Esophagus squamous epithelium (tissue), 5 donors: ENCODE measurements at regions of chr3 and their contacts with region 1.

Region 1: GRCh38 chr3:11335056-11335608 is 62.9 kb downstream of the ATG7 start:
- DNase-seq: no peak
- H3K4me3 ChIP-seq: no peak overlapping the region
- H3K27ac ChIP-seq: no peak overlapping the region
- H3K4me1 ChIP-seq: peaks cover 0 to 3% (median 0%) of the 10 kb centered on the region in 3 donors
- H3K27me3 ChIP-seq: no peaks in the 10 kb centered on the region
- CTCF ChIP-seq: peak; percentile 32 to 87 (median 68)
- POLR2A ChIP-seq: no peak

Region 2: DNA sequence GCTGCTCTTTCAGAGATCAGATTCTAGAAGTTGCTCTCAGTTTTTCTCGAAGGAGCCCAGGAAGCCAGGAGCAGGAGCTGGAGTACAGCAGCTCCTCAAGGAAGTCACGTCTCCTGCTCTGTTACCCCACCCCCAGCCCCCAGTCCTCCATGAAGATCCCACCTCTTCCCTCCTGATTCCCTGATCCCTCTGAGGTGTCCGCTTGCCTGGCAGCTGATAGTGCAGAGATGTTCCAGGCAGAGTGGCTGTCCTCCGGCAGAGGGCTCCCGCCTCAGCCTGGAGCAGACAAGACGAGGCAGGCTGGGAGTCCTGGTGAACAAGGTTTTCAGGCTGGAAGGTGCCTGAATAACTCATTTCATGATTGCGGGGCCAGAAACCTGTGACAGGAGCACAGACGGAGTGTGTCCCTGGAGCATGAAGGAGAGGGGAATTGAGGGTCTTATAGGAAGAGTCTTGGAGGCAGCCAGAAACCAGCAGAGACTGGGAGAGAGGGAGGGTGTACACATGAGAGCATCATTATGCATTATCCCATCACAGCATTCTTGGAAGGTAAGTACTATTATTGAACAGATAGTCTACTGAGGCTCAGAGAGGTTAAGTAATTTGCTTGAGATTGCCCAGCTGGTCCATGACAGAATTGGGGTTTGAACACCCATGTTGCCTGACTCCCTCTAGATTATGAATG is 179.6 kb before region 1 on chr3:
- intact Hi-C with region 1: loop called (anchors 10 kb)
- DNase-seq: no peak
- H3K4me3 ChIP-seq: peak overlapping the region; percentile 47 to 78 (median 54)
- H3K27ac ChIP-seq: peak overlapping the region; percentile 46 to 75 (median 70)
- H3K4me1 ChIP-seq: peaks cover 8 to 44% (median 20%) of the 10 kb centered on the region in 3 donors
- H3K27me3 ChIP-seq: peaks cover 0 to 39% (median 0%) of the 10 kb centered on the region in 4 donors
- CTCF ChIP-seq: peak; percentile 12 to 81 (median 69)
- POLR2A ChIP-seq: no peak

Region 3: GRCh38 chr3:11764931-11765363 is 429.8 kb after region 1 on chr3:
- intact Hi-C with region 1: no loop called
- DNase-seq: no peak
- H3K4me3 ChIP-seq: no peak overlapping the region
- H3K27ac ChIP-seq: no peak overlapping the region
- H3K4me1 ChIP-seq: peaks cover under 1 to 10% (median 1%) of the 10 kb centered on the region in 3 donors
- H3K27me3 ChIP-seq: no peaks in the 10 kb centered on the region
- CTCF ChIP-seq: no peak
- POLR2A ChIP-seq: no peak